ENCODE measurements at regions of chr6 and their contacts with region 1.

Region 1: DNA sequence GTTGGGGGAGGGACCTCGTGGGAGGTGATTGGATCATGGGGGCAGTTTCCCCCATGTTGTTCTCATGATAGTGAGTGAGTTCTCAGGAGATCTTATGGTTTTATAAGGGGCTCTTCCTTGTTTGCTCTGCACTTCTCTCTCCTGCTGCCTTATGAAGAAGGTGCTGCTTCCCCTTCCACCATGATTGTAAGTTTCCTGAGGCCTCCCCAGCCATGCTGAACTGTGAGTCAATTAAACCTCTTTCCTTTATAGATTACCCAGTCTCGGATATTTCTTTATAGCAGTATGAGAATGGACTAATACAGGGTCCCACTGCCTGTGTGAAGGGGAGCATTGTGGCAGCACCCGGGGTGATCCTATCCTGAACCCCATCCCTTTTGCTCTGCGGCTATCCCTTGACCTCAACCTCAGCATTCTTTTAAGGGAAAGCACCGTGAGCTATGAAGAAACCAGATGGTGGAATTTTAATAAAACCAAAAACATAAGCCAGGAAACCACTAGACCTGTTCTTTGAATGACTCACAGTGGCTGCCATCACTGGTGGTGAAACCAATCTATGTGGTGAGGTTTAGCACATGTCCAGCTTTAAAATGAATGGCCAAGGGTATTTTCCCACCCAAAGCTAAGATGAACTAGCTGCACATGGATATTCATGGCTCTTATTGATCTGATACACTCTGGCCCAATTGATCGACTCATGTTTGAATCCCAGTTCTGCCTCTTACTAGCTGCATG is 62.2 kb downstream of the ZDHHC14 start:
- DNase-seq: no peak
- ATAC-seq: no peak
- H3K4me3 Mint-ChIP-seq: no peak overlapping the region
- H3K27ac Mint-ChIP-seq: no peak overlapping the region
- H3K4me1 Mint-ChIP-seq: peaks cover 5% of the 10 kb centered on the region
- H3K27me3 Mint-ChIP-seq: no peaks in the 10 kb centered on the region
- CTCF ChIP-seq: no peak

Region 2: DNA sequence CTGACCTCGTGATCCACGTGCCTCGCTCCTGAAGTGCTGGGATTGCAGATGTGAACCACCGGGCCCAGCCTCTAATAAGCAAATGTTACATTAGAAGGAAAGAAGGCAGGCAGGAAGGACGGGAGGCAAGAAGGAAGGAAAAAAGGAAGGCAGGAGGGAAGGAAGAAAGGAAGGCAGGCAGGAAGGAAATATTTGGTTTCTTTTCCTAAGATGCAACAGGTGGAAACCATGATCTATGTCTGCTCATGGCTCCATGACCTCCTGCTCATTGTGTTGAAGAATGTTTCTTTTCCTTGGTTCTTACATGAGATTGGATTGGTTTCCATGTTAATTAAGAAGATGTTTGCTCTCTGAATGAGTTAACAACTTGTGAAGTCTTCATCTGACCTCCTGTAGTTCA is 288.0 kb after region 1 on chr6:
- CTCF ChIA-PET with region 1: no interaction called
- POLR2A ChIA-PET with region 1: interaction called, 10 read pairs
- DNase-seq: no peak
- ATAC-seq: no peak
- H3K4me3 Mint-ChIP-seq: no peak overlapping the region
- H3K27ac Mint-ChIP-seq: no peak overlapping the region
- H3K4me1 Mint-ChIP-seq: peaks cover 14% of the 10 kb centered on the region
- H3K27me3 Mint-ChIP-seq: no peaks in the 10 kb centered on the region
- CTCF ChIP-seq: no peak

Measured in WTC11 (cell line).